Activated T-helper 1 cell treated with anti-CD3 and anti-CD28 coated beads, Interleukin-12 subunit alpha, Interleukin-12 subunit beta, Interleukin-2, Interleukin-4 antibody, amounts not matched to agents 30 ng/mL and 10 ng/mL and 1 ng/mL, durations not matched to agents 14 hours and 24 hours and 36 hours (primary cell): ENCODE measurements at regions of chr1 and their contacts with region 1.

Region 1: DNA sequence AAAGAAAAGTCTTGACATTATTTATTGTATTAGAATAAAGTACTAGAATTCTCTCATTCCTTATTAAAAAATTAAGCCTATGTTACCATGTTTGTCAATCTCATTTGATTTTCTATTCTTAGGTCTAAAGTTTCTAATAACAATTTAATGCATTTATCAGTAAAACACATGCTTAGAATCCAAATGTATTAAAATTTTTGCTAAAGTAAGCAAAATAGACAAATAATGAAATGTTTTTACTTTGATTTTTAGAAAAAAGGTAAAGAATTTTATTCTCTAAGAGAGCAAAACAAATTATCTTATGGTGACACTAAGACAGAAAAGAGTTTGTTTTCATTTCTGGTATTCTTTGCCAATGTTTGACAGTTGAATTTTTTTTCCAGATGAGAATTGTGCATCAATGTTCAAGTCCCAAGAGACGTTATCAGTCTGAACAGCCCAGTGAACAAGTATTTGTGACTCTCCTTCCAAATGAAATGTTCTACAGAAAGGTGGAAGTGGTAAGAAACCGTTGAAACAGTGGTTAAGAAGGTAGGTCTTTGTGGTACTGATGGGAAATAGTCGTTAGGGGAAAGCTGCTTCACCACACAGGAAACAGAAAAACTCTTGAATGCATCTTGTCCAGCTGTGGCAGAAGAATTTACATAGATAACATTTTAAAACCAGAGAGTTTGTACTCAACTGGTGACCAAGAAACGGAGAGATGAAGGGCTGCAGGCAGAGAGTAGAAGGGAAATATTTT is 402.5 kb downstream of the PTPRC start:
- DNase-seq: peak; percentile 66
- H3K4me3 Mint-ChIP-seq: peak overlapping the region; percentile 35
- H3K27ac Mint-ChIP-seq: peak overlapping the region; percentile 83
- H3K4me1 Mint-ChIP-seq: peaks cover 54% of the 10 kb centered on the region
- H3K27me3 Mint-ChIP-seq: no peaks in the 10 kb centered on the region

Region 2: GRCh38 chr1:198042168-198042567 is 999.2 kb before region 1 on chr1:
- intact Hi-C with region 1: no loop called
- DNase-seq: no peak
- H3K4me3 Mint-ChIP-seq: no peak overlapping the region
- H3K27ac Mint-ChIP-seq: no peak overlapping the region
- H3K4me1 Mint-ChIP-seq: peaks cover 4% of the 10 kb centered on the region
- H3K27me3 Mint-ChIP-seq: no peaks in the 10 kb centered on the region

Region 3: GRCh38 chr1:198771563-198772153 is 269.7 kb before region 1 on chr1:
- intact Hi-C with region 1: loop called (anchors 5 kb)
- DNase-seq: no peak
- H3K4me3 Mint-ChIP-seq: no peak overlapping the region
- H3K27ac Mint-ChIP-seq: no peak overlapping the region
- H3K4me1 Mint-ChIP-seq: peaks cover 11% of the 10 kb centered on the region
- H3K27me3 Mint-ChIP-seq: peaks cover 5% of the 10 kb centered on the region

Region 4: GRCh38 chr1:198922638-198923430 is 118.5 kb before region 1 on chr1:
- intact Hi-C with region 1: loop called (anchors 1 kb)
- DNase-seq: no peak
- H3K4me3 Mint-ChIP-seq: peak overlapping the region; percentile 78
- H3K27ac Mint-ChIP-seq: peak overlapping the region; percentile 90
- H3K4me1 Mint-ChIP-seq: peaks cover 90% of the 10 kb centered on the region
- H3K27me3 Mint-ChIP-seq: no peaks in the 10 kb centered on the region

Region 5: DNA sequence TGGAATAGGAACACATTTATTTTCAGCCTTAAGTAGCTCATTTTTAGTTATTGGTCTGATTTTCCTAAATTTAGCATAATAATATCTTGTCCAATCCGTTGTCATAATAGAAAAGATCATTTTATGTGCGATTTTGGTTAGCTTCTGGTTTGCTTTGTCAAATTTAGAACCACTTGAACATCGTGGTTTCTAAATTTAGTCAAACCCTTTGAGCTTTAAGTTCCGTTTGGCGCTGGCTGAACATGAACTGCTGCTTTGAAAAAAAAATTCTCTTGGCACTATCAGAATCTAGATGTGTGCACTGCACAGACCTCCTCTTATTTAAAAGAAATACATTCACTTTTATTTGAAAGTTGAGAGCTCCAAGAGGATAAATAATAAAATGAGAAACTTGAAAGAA is 31.9 kb before region 1 on chr1:
- intact Hi-C with region 1: loop called (anchors 1 kb)
- DNase-seq: peak; percentile 8
- H3K4me3 Mint-ChIP-seq: peak overlapping the region; percentile 75
- H3K27ac Mint-ChIP-seq: peak overlapping the region; percentile 76
- H3K4me1 Mint-ChIP-seq: peaks cover 50% of the 10 kb centered on the region
- H3K27me3 Mint-ChIP-seq: no peaks in the 10 kb centered on the region

Region 6: DNA sequence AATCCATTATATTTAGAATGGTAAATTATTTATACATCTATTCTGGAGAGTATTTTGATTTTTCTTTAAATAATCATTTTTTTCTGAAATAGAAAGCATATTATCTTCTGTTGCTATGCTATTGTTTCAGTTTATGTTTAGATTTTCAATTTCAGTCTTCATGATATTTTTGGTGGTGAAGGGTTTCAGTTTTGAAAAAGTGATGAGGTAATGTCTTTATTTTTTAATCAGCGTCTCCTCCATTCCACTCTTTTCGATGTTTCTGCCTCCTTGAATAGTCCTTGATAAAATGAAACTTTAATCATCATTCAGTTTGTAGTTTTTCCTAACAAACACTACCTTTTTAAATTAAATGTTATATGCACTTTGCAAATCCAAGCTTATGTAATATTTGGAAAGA is 26.1 kb after region 1 on chr1:
- intact Hi-C with region 1: loop called (anchors 1 kb)
- DNase-seq: no peak
- H3K4me3 Mint-ChIP-seq: peak overlapping the region; percentile 38
- H3K27ac Mint-ChIP-seq: peak overlapping the region; percentile 21
- H3K4me1 Mint-ChIP-seq: peaks cover 50% of the 10 kb centered on the region
- H3K27me3 Mint-ChIP-seq: no peaks in the 10 kb centered on the region

Region 7: DNA sequence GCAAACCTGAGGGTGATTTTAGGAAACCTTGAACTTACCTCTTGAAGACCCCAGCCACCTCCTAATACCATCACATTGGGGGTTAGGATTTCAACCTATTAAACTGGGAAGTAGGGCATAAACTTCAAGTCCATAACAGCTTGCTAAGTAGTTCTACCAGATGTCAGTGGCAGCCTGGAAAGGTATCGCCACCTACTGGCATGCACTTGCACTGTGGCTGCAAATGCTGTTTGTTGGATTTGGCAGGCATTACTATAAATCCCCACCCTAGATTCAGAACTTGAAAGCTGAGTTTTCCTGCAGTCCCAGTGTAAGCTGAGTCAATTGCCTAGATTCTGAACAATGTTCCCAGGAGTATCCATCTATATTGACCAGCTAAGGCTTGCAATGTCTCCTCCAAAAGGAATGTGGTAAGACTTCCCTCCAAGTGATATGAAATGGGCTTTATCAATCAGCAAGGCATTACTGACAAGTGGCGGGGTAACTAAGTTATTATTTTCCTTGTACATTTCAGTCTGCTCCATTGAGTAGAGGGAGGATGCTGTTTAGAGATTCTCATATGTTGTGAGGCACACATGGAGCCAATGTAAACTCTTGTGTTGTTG is 72.0 kb after region 1 on chr1:
- intact Hi-C with region 1: loop called (anchors 2 kb)
- DNase-seq: peak; percentile 58
- H3K4me3 Mint-ChIP-seq: no peak overlapping the region
- H3K27ac Mint-ChIP-seq: no peak overlapping the region
- H3K4me1 Mint-ChIP-seq: peaks cover 31% of the 10 kb centered on the region
- H3K27me3 Mint-ChIP-seq: no peaks in the 10 kb centered on the region

Region 8: GRCh38 chr1:199243423-199244061 is 202.2 kb after region 1 on chr1:
- intact Hi-C with region 1: loop called (anchors 2 kb)
- DNase-seq: peak; percentile 70
- H3K4me3 Mint-ChIP-seq: no peak overlapping the region
- H3K27ac Mint-ChIP-seq: no peak overlapping the region
- H3K4me1 Mint-ChIP-seq: peaks cover 18% of the 10 kb centered on the region
- H3K27me3 Mint-ChIP-seq: peaks cover 19% of the 10 kb centered on the region